ENCODE measurements at regions of chr13 and their contacts with region 1.

Region 1: GRCh38 chr13:81987159-81987558 is 1646.2 kb upstream of the SPRY2 start:
- DNase-seq: no peak
- ATAC-seq: peak; percentile 71
- H3K4me3 Mint-ChIP-seq: peak overlapping the region; percentile 15
- H3K27ac Mint-ChIP-seq: 0 out of 2 replicates have a peak overlapping the region, but pooled peaks have one; percentile 70
- H3K4me1 Mint-ChIP-seq: peaks cover 63% of the 10 kb centered on the region
- H3K27me3 Mint-ChIP-seq: peaks cover 65% of the 10 kb centered on the region
- CTCF ChIP-seq: no peak

Region 2: GRCh38 chr13:81487151-81487550 is 500.0 kb before region 1 on chr13:
- CTCF ChIA-PET with region 1: interaction called, 11 read pairs
- POLR2A ChIA-PET with region 1: no interaction called
- DNase-seq: peak; percentile 49
- ATAC-seq: peak; percentile 100
- H3K4me3 Mint-ChIP-seq: no peak overlapping the region
- H3K27ac Mint-ChIP-seq: no peak overlapping the region
- H3K4me1 Mint-ChIP-seq: peaks cover 18% of the 10 kb centered on the region
- H3K27me3 Mint-ChIP-seq: no peaks in the 10 kb centered on the region
- CTCF ChIP-seq: peak; percentile 35

Region 3: GRCh38 chr13:81929988-81930387 is 57.2 kb before region 1 on chr13:
- CTCF ChIA-PET with region 1: interaction called, 13 read pairs
- POLR2A ChIA-PET with region 1: no interaction called
- DNase-seq: no peak
- ATAC-seq: peak; percentile 94
- H3K4me3 Mint-ChIP-seq: no peak overlapping the region
- H3K27ac Mint-ChIP-seq: peak overlapping the region; percentile 87
- H3K4me1 Mint-ChIP-seq: peaks cover 23% of the 10 kb centered on the region
- H3K27me3 Mint-ChIP-seq: no peaks in the 10 kb centered on the region
- CTCF ChIP-seq: no peak

Region 4: DNA sequence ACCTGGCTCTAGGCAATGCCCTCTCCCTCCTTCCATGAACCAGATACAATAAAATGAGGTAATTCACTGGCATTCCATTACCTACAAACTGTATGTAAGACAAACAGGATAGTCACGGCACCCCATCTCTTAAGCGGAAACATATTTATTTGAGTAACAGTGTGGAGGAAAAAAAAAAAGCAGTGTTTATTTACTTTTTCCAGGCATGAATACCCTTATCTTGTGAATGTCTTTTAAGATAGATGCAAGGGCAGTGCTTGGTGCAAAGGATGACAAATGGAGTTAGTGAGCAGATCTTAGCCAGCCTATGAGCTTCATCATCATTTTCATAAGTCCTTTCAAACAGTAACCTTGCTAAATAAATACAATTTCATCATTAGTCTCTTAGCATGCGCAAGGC is 15.5 kb after region 1 on chr13:
- CTCF ChIA-PET with region 1: no interaction called
- POLR2A ChIA-PET with region 1: no interaction called
- DNase-seq: no peak
- ATAC-seq: no peak
- H3K4me3 Mint-ChIP-seq: no peak overlapping the region
- H3K27ac Mint-ChIP-seq: no peak overlapping the region
- H3K4me1 Mint-ChIP-seq: peaks cover 6% of the 10 kb centered on the region
- H3K27me3 Mint-ChIP-seq: no peaks in the 10 kb centered on the region
- CTCF ChIP-seq: no peak

Measured in WTC11 (cell line).